Activated CD8-positive, alpha-beta T cell treated with anti-CD3 and anti-CD28 coated beads for 36 hours (primary cell): ENCODE measurements at regions of chr19 and their contacts with region 1.

Region 1: GRCh38 chr19:21482863-21483276 is 22.5 kb upstream of the ZNF429 start:
- DNase-seq: peak; percentile 72
- ATAC-seq: peak; percentile 87
- H3K4me3 Mint-ChIP-seq: no peak overlapping the region
- H3K27ac Mint-ChIP-seq: no peak overlapping the region
- H3K4me1 Mint-ChIP-seq: no peaks in the 10 kb centered on the region
- H3K27me3 Mint-ChIP-seq: no peaks in the 10 kb centered on the region
- CTCF ChIP-seq: peak; percentile 86

Region 2: DNA sequence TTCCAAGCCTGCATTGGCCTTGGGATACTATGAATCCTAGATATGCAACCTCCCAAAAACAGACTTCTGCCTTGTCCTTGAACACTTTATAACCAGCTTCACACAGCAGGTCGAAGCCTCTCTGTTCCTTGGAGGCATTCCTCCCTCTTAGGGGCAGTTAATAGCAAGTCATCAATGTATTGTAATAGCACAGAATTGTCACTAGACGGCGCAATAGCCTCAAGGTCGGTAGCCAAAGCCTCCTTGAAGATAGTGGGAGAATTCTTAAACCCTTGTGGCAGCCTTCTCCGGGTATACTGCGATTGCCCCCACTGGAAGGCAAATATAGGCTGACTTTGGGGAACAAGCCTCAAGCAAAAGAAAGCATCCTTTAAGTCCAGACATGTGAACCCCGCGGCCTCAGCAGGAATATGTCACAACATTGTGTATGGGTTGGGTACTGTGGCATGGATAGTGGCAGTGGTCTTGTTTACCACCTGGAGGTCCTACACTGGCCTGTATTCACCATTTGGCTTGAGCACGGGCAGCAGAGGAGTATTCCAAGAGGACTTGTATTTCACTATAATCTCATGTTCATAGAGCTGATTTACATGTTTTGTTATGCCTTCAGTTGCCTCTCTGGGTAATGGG is 279.9 kb before region 1 on chr19:
- CTCF ChIA-PET with region 1: interaction called, 15 read pairs
- POLR2A ChIA-PET with region 1: no interaction called
- intact Hi-C with region 1: loop called (anchors 2 kb)
- DNase-seq: peak; percentile 41
- ATAC-seq: peak; percentile 61
- H3K4me3 Mint-ChIP-seq: no peak overlapping the region
- H3K27ac Mint-ChIP-seq: no peak overlapping the region
- H3K4me1 Mint-ChIP-seq: no peaks in the 10 kb centered on the region
- H3K27me3 Mint-ChIP-seq: peaks cover 6% of the 10 kb centered on the region
- CTCF ChIP-seq: peak; percentile 92

Region 3: GRCh38 chr19:21505459-21506451 is 22.9 kb after region 1 on chr19 and contains the start of gene ZNF429:
- CTCF ChIA-PET with region 1: interaction called, 10 read pairs
- POLR2A ChIA-PET with region 1: no interaction called
- intact Hi-C with region 1: no loop called
- DNase-seq: peak; percentile 97
- ATAC-seq: peak; percentile 99
- H3K4me3 Mint-ChIP-seq: peak within 1 kb of the TSS; percentile 100
- H3K27ac Mint-ChIP-seq: peak within 1 kb of the TSS; percentile 99
- H3K4me1 Mint-ChIP-seq: peaks cover 37% of the 10 kb centered on the region
- H3K27me3 Mint-ChIP-seq: no peaks in the 10 kb centered on the region
- CTCF ChIP-seq: no peak
- total RNA-seq, gene ZNF429: 11.8 to 14.7 TPM

Region 4: GRCh38 chr19:21698215-21698614 is 215.3 kb after region 1 on chr19:
- CTCF ChIA-PET with region 1: interaction called, 5 read pairs
- POLR2A ChIA-PET with region 1: no interaction called
- intact Hi-C with region 1: loop called (anchors 5 kb)
- DNase-seq: no peak
- ATAC-seq: peak; percentile 61
- H3K4me3 Mint-ChIP-seq: no peak overlapping the region
- H3K27ac Mint-ChIP-seq: no peak overlapping the region
- H3K4me1 Mint-ChIP-seq: no peaks in the 10 kb centered on the region
- H3K27me3 Mint-ChIP-seq: no peaks in the 10 kb centered on the region
- CTCF ChIP-seq: peak; percentile 75